MCF 10A (cell line): ENCODE measurements at regions of chr15 and their contacts with region 1.

Region 1: GRCh38 chr15:55318588-55319494 is at the starts of genes PIGB and PIGBOS1:
- DNase-seq: peak; percentile 86
- H3K4me3 Mint-ChIP-seq: peak within 1 kb of the TSS; percentile 93
- H3K27ac Mint-ChIP-seq: peak within 1 kb of the TSS; percentile 98
- H3K4me1 Mint-ChIP-seq: peaks cover 15% of the 10 kb centered on the region
- H3K27me3 Mint-ChIP-seq: no peaks in the 10 kb centered on the region
- CTCF ChIP-seq: no peak
- total RNA-seq, gene PIGB: 16.2 and 22.2 TPM in 2 replicates
- total RNA-seq, gene PIGBOS1: 13.9 and 16.1 TPM in 2 replicates

Region 2: DNA sequence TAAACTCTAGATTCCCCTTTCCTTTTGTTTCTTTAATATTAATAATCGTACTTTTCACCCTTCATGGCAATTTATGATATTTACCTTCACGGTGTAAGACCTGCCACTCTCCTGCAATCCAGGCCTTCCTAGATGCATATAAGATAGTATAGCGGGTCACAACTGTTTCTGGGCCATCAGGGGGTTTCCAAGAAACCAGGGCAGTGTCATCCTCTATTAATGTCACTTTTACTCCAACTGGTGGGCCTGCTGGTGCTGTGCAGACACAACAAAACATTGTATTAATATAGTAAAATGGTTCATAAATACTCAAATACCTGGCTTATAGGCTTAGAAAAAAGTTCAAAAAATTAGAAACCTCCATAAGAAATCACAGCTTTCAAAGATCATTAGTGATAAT is 318.2 kb after region 1 on chr15:
- CTCF ChIA-PET with region 1: interaction called, 3 read pairs
- POLR2A ChIA-PET with region 1: no interaction called
- intact Hi-C with region 1: loop called (anchors 1 kb)
- DNase-seq: no peak
- H3K4me3 Mint-ChIP-seq: no peak overlapping the region
- H3K27ac Mint-ChIP-seq: no peak overlapping the region
- H3K4me1 Mint-ChIP-seq: peaks cover 6% of the 10 kb centered on the region
- H3K27me3 Mint-ChIP-seq: no peaks in the 10 kb centered on the region
- CTCF ChIP-seq: no peak